Activated T-helper 1 cell treated with anti-CD3 and anti-CD28 coated beads, Interleukin-12 subunit alpha, Interleukin-12 subunit beta, Interleukin-2, Interleukin-4 antibody, amounts not matched to agents 30 ng/mL and 10 ng/mL and 1 ng/mL, durations not matched to agents 14 hours and 24 hours and 36 hours (primary cell): ENCODE measurements at regions of chr10 and their contacts with region 1.

Region 1: GRCh38 chr10:101704331-101704730 is 9.4 kb upstream of the FBXW4 start:
- DNase-seq: no peak
- H3K4me3 Mint-ChIP-seq: no peak overlapping the region
- H3K27ac Mint-ChIP-seq: no peak overlapping the region
- H3K4me1 Mint-ChIP-seq: peaks cover 51% of the 10 kb centered on the region
- H3K27me3 Mint-ChIP-seq: peaks cover 38% of the 10 kb centered on the region

Region 2: GRCh38 chr10:101602761-101603398 is 101.5 kb before region 1 on chr10:
- intact Hi-C with region 1: loop called (anchors 5 kb)
- DNase-seq: peak; percentile 68
- H3K4me3 Mint-ChIP-seq: no peak overlapping the region
- H3K27ac Mint-ChIP-seq: no peak overlapping the region
- H3K4me1 Mint-ChIP-seq: no peaks in the 10 kb centered on the region
- H3K27me3 Mint-ChIP-seq: no peaks in the 10 kb centered on the region

Region 3: GRCh38 chr10:101959349-101959916 is 255.1 kb after region 1 on chr10:
- intact Hi-C with region 1: no loop called
- DNase-seq: no peak
- H3K4me3 Mint-ChIP-seq: no peak overlapping the region
- H3K27ac Mint-ChIP-seq: no peak overlapping the region
- H3K4me1 Mint-ChIP-seq: no peaks in the 10 kb centered on the region
- H3K27me3 Mint-ChIP-seq: no peaks in the 10 kb centered on the region